ENCODE measurements at regions of chr1 and their contacts with region 1.

Region 1: GRCh38 chr1:178310685-178311105 is 186.1 kb downstream of the CLEC20A start:
- DNase-seq: no peak
- ATAC-seq: peak; percentile 49
- H3K4me3 Mint-ChIP-seq: no peak overlapping the region
- H3K27ac Mint-ChIP-seq: no peak overlapping the region
- H3K4me1 Mint-ChIP-seq: no peaks in the 10 kb centered on the region
- H3K27me3 Mint-ChIP-seq: peaks cover 8% of the 10 kb centered on the region

Region 2: GRCh38 chr1:178183796-178184195 is 126.9 kb before region 1 on chr1:
- CTCF ChIA-PET with region 1: no interaction called
- POLR2A ChIA-PET with region 1: no interaction called
- intact Hi-C with region 1: no loop called
- DNase-seq: no peak
- ATAC-seq: no peak
- H3K4me3 Mint-ChIP-seq: no peak overlapping the region
- H3K27ac Mint-ChIP-seq: no peak overlapping the region
- H3K4me1 Mint-ChIP-seq: no peaks in the 10 kb centered on the region
- H3K27me3 Mint-ChIP-seq: peaks cover 2% of the 10 kb centered on the region

Region 3: DNA sequence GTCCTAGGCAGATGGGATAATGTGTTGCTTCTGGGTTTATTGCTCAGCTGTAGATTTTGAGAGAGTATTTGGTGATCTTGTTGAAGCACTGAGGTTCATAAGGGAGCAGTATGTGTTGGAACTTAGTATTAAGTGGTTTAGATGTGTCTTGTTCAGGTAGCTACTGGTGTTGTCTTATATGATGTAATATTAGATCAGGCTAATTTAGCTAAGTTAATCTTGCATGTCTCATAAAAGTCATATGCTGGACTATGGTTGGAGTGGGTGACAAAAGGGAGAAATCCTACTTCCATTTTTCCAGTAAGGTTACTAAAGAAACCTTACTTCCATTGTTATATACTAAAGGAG is 10.4 kb before region 1 on chr1:
- CTCF ChIA-PET with region 1: interaction called, 41 read pairs
- POLR2A ChIA-PET with region 1: no interaction called
- intact Hi-C with region 1: no loop called
- DNase-seq: no peak
- ATAC-seq: no peak
- H3K4me3 Mint-ChIP-seq: no peak overlapping the region
- H3K27ac Mint-ChIP-seq: no peak overlapping the region
- H3K4me1 Mint-ChIP-seq: no peaks in the 10 kb centered on the region
- H3K27me3 Mint-ChIP-seq: peaks cover 6% of the 10 kb centered on the region

Region 4: DNA sequence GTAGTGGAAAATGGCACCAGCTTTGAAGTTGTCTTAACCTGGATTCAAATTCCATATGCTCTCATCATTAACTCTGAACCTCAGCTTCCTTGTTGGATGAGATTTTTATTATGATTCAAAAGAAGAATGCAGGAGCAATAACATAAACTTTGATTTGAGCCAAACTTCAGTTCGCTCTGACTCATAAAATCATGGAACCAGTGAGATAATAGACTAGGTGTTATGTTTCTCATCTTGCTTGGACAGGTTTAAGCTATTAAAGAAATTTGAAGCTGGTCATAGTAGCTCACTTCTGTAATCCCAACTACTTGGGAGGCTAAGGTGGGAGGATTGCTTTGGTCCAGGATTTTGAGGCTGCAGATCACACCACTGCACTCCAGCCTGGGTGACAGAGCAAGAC is 13.3 kb after region 1 on chr1:
- CTCF ChIA-PET with region 1: interaction called, 10 read pairs
- POLR2A ChIA-PET with region 1: no interaction called
- intact Hi-C with region 1: no loop called
- DNase-seq: no peak
- ATAC-seq: no peak
- H3K4me3 Mint-ChIP-seq: no peak overlapping the region
- H3K27ac Mint-ChIP-seq: no peak overlapping the region
- H3K4me1 Mint-ChIP-seq: no peaks in the 10 kb centered on the region
- H3K27me3 Mint-ChIP-seq: peaks cover 7% of the 10 kb centered on the region

Region 5: DNA sequence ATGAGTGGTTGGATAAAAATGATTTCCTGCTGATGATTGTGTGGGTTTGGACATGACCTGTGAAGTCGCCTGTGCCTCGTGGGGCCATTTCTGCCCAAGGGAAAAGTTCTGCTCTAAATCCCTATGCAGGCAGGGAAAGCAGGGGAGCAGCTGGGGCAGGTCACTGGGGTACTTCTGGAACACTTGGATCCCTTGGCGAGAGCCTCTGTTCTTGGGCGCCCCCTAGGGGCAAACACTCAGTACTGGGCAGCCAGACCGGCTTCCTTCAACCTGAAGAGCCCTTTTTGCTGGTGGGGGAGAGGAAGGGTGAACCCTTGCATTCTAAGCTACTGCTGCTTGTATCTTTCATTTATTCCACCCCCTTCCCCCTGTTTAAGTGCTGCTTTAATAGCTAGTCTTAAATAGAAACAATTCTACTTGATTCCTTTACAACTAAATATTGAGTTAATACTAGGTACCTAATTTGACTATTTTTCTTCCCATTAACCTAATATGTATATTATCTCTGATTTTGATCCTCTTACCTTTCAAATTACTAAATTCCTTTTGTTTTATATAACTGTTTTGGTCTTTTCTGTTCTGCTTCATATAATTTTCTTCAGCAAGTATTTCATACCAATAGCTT is 191.1 kb after region 1 on chr1:
- CTCF ChIA-PET with region 1: interaction called, 20 read pairs
- POLR2A ChIA-PET with region 1: no interaction called
- intact Hi-C with region 1: loop called (anchors 2 kb)
- DNase-seq: peak; percentile 80
- ATAC-seq: peak; percentile 75
- H3K4me3 Mint-ChIP-seq: no peak overlapping the region
- H3K27ac Mint-ChIP-seq: no peak overlapping the region
- H3K4me1 Mint-ChIP-seq: no peaks in the 10 kb centered on the region
- H3K27me3 Mint-ChIP-seq: peaks cover 2% of the 10 kb centered on the region

Region 6: DNA sequence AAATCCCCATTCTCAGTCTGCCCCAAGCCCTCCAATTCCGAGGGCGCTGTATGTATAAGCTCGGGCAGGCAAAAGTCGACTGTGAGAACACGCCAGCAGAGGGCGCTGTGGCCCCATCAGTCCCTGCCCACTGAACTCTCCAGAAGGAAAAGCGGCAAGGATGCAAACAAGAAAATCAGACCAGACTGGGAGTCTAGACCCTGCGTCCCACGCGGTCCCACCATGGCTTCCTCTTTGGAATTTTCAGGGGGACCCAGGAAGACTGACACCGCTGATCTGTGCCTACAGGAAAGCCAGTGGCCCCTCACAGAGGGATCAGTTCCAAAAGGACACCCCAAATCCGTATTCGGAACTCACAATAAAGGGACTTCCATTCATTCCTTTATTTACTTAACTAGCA is 221.7 kb after region 1 on chr1:
- CTCF ChIA-PET with region 1: interaction called, 6 read pairs
- POLR2A ChIA-PET with region 1: no interaction called
- intact Hi-C with region 1: loop called in 1 of 2 experiments (anchors 2 kb)
- DNase-seq: peak; percentile 86
- ATAC-seq: peak; percentile 84
- H3K4me3 Mint-ChIP-seq: no peak overlapping the region
- H3K27ac Mint-ChIP-seq: no peak overlapping the region
- H3K4me1 Mint-ChIP-seq: no peaks in the 10 kb centered on the region
- H3K27me3 Mint-ChIP-seq: no peaks in the 10 kb centered on the region

Region 7: DNA sequence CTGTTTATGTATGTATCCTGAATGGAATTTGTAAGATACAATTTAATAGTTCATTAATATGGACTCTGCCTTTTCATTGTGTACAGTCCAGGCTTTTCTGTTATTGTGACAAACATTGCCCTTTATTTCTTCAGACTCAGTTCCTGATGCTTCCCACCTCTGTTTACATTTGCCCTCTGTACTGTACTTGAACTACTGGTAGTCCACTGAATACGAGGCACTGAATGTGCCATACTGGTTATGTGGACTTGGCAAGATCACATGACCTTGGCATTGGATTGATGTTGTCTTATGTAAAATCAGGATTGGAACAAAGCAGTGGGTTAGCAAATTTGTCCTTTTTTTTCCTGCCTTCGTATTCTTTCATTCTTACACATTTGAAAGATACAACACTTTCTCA is 442.2 kb after region 1 on chr1:
- CTCF ChIA-PET with region 1: no interaction called
- POLR2A ChIA-PET with region 1: no interaction called
- intact Hi-C with region 1: loop called in 1 of 2 experiments (anchors 2 kb)
- DNase-seq: no peak
- ATAC-seq: no peak
- H3K4me3 Mint-ChIP-seq: no peak overlapping the region
- H3K27ac Mint-ChIP-seq: no peak overlapping the region
- H3K4me1 Mint-ChIP-seq: peaks cover 3% of the 10 kb centered on the region
- H3K27me3 Mint-ChIP-seq: no peaks in the 10 kb centered on the region